SK-N-SH (cell line): ENCODE measurements at regions of chr17 and their contacts with region 1.

Region 1: GRCh38 chr17:55513885-55514591 is 2.8 kb upstream of the SMIM36 start:
- DNase-seq: peak; percentile 73
- H3K4me3 ChIP-seq: peak overlapping the region in 1 of 2 experiments; percentile 13; a peak in 1 of 4 replicates
- H3K27ac ChIP-seq: no peak overlapping the region
- H3K4me1 ChIP-seq: peaks cover 0 to 4% of the 10 kb centered on the region in 2 experiments; a peak in 2 of 4 replicates
- H3K27me3 ChIP-seq: peaks cover 19% of the 10 kb centered on the region; the same call in 1 of the 2 replicates
- CTCF ChIP-seq: peak; percentile 100
- EP300 ChIP-seq: no peak; a peak in 1 of 4 replicates
- RAD21 ChIP-seq: peak; percentile 99

Region 2: GRCh38 chr17:55053855-55054254 is 460.2 kb before region 1 on chr17:
- CTCF ChIA-PET with region 1: interaction called, 10 read pairs
- POLR2A ChIA-PET with region 1: no interaction called
- DNase-seq: peak; percentile 3
- H3K4me3 ChIP-seq: no peak overlapping the region
- H3K27ac ChIP-seq: no peak overlapping the region
- H3K4me1 ChIP-seq: peaks cover 5% of the 10 kb centered on the region in 2 experiments; a peak in 3 of 4 replicates
- H3K27me3 ChIP-seq: no peaks in the 10 kb centered on the region
- CTCF ChIP-seq: peak; percentile 82
- EP300 ChIP-seq: no peak
- RAD21 ChIP-seq: peak; percentile 86

Region 3: GRCh38 chr17:55348749-55349354 is 165.2 kb before region 1 on chr17:
- CTCF ChIA-PET with region 1: interaction called, 105 read pairs
- POLR2A ChIA-PET with region 1: no interaction called
- DNase-seq: peak; percentile 57
- H3K4me3 ChIP-seq: no peak overlapping the region
- H3K27ac ChIP-seq: no peak overlapping the region
- H3K4me1 ChIP-seq: peaks cover 0 to 2% of the 10 kb centered on the region in 2 experiments; a peak in 1 of 4 replicates
- H3K27me3 ChIP-seq: no peaks in the 10 kb centered on the region
- CTCF ChIP-seq: peak; percentile 98
- EP300 ChIP-seq: no peak
- RAD21 ChIP-seq: peak; percentile 91

Region 4: GRCh38 chr17:55366020-55366481 is 148.0 kb before region 1 on chr17:
- CTCF ChIA-PET with region 1: interaction called, 105 read pairs
- POLR2A ChIA-PET with region 1: no interaction called
- DNase-seq: peak; percentile 60
- H3K4me3 ChIP-seq: no peak overlapping the region
- H3K27ac ChIP-seq: peak overlapping the region in 1 of 2 experiments; percentile 87; a peak in 2 of 4 replicates
- H3K4me1 ChIP-seq: peaks cover 0 to 6% of the 10 kb centered on the region in 2 experiments; a peak in 2 of 4 replicates
- H3K27me3 ChIP-seq: no peaks in the 10 kb centered on the region
- CTCF ChIP-seq: no peak
- EP300 ChIP-seq: peak in 1 of 2 experiments; percentile 92; a peak in 2 of 4 replicates
- RAD21 ChIP-seq: no peak; the same call in 1 of the 2 replicates

Region 5: DNA sequence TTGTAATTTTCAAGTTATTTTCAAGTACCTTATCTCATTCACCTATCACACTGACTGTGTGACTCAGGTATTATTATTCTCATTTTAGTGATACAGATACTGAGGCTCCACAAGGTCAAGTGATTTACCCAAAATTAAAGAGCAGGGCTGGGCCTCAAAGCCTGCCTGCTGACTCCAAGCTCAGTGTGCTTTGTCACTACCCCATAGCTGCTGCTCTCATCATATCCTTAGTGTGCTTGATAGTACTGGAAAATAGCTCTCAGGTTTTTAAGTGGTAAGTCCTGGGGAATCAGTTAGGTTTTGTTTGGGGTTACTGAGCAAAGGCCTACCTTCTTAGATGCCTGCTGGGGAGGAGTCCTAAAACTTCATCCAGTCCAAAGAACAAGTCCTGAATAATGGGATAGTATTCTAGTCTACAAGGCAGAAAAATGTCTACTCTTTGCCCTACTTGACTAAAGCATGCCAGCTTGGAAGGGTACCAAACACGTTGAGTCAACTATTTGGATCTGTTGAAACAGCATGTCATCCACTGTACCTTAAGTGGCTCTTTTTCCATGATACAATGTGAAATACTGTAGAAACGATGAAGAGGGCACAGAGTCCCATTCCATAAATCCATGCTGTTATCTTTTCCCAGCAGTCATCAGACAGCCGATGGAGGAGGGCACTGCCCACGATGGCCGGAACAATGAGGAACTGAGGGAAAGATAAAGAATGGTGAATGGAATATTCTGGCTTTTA is 103.1 kb before region 1 on chr17:
- CTCF ChIA-PET with region 1: interaction called, 30 read pairs
- POLR2A ChIA-PET with region 1: no interaction called
- DNase-seq: peak; percentile 53
- H3K4me3 ChIP-seq: no peak overlapping the region
- H3K27ac ChIP-seq: peak overlapping the region; percentile 0 to 96; a peak in 3 of 4 replicates
- H3K4me1 ChIP-seq: peaks cover 0 to 18% of the 10 kb centered on the region in 2 experiments; a peak in 2 of 4 replicates
- H3K27me3 ChIP-seq: no peaks in the 10 kb centered on the region
- CTCF ChIP-seq: no peak
- EP300 ChIP-seq: no peak
- RAD21 ChIP-seq: no peak; the same call in 1 of the 2 replicates

Region 6: DNA sequence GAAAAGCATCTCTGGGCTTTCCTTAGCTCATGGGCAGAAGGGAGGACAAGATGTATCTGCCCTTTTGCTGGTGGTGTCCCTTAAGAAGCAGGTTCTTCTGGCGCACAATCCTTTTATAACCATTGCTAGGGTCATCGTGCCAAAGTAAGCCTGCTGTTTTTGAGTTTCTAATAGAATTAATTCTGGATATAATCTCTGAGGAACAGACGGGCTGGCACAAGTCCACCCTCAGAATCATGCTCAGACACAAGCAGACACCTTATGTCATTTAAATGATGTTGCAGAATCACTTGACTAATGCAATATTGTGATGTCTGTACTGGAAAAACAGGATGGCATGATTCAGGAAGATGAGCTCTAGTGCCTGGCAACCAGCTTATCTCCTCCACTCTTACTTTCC is 73.6 kb before region 1 on chr17:
- CTCF ChIA-PET with region 1: interaction called, 12 read pairs
- POLR2A ChIA-PET with region 1: no interaction called
- DNase-seq: peak; percentile 65
- H3K4me3 ChIP-seq: no peak overlapping the region
- H3K27ac ChIP-seq: peak overlapping the region in 1 of 2 experiments; percentile 94; a peak in 2 of 4 replicates
- H3K4me1 ChIP-seq: peaks cover 3 to 46% of the 10 kb centered on the region in 2 experiments; a peak in 3 of 4 replicates
- H3K27me3 ChIP-seq: no peaks in the 10 kb centered on the region
- CTCF ChIP-seq: no peak
- EP300 ChIP-seq: peak in 1 of 2 experiments; percentile 90; a peak in 2 of 4 replicates
- RAD21 ChIP-seq: peak; percentile 29; the same call in 1 of the 2 replicates

Region 7: DNA sequence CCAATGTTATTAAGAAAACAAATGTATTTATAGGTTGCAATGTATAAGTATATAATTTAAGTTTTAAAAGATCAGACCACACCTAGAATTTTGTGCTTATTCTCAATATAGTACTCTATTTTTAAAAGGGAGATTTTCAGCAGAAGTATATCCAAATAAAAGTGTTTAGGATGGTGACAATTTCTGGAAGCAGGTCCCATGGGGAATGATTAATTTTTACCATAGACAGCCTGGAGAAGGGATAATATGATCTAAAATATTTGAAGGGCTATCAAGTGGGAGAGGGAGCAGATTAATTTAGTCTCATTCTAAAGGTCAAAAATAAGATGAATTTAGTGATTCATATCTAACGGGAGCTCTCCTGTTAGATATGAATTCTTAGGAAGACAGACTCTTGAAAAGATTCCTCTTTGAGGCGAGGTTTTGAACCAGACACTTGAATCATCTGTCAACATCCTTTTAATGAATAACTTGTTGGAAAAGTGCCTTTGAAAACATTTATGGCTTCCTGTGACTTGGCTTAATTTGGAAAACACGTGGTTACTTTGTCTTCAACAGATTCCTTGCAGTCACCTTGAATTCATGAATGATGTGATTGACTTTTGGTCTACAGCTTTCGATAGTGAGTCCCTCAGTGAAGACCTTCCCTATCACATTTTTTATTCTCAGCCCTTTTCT is 26.5 kb after region 1 on chr17:
- CTCF ChIA-PET with region 1: no interaction called
- POLR2A ChIA-PET with region 1: no interaction called
- DNase-seq: no peak
- H3K4me3 ChIP-seq: no peak overlapping the region
- H3K27ac ChIP-seq: no peak overlapping the region
- H3K4me1 ChIP-seq: no peaks in the 10 kb centered on the region
- H3K27me3 ChIP-seq: no peaks in the 10 kb centered on the region
- CTCF ChIP-seq: no peak
- EP300 ChIP-seq: peak in 1 of 2 experiments; percentile 49; a peak in 1 of 4 replicates
- RAD21 ChIP-seq: no peak

Region 8: DNA sequence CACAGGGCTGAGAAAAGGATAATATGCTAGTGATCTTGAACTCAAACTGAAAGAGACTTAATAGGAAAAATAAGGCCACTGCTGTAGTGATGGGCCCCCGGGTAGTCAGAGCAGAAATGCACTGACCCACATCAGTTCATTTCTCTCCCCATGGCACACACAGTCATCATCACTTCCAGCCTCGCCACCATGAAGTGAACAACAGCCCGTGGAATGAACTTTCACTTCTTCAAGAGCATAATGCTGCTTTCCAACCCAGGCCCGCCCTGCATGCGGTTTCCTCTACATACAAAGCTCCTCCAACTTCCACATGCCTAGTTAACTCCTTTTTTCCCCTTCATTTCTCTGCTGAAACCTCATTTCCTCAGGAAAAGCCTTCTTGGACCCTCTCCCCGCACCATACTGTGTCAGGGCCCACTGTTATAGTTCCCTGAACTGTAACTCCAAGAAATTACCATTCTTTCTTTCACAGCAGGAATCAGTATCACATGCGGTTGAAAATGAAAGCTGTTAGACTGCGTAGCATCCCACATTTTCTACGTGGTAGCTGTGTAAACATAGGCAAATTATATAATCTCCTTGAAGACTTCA is 63.1 kb after region 1 on chr17:
- CTCF ChIA-PET with region 1: no interaction called
- POLR2A ChIA-PET with region 1: no interaction called
- DNase-seq: no peak
- H3K4me3 ChIP-seq: no peak overlapping the region
- H3K27ac ChIP-seq: peak overlapping the region in 1 of 2 experiments; percentile 18; a peak in 2 of 4 replicates
- H3K4me1 ChIP-seq: peaks cover 4 to 11% of the 10 kb centered on the region in 2 experiments; a peak in 1 of 4 replicates
- H3K27me3 ChIP-seq: no peaks in the 10 kb centered on the region
- CTCF ChIP-seq: no peak
- EP300 ChIP-seq: no peak
- RAD21 ChIP-seq: no peak